ENCODE measurements at regions of chr3 and their contacts with region 1.

Region 1: GRCh38 chr3:186617038-186617946 is 4.4 kb downstream of the AHSG start:
- DNase-seq: peak; percentile 89
- H3K4me3 Mint-ChIP-seq: peak overlapping the region; percentile 19
- H3K27ac Mint-ChIP-seq: no peak overlapping the region
- H3K4me1 Mint-ChIP-seq: peaks cover 22% of the 10 kb centered on the region
- H3K27me3 Mint-ChIP-seq: peaks cover 59% of the 10 kb centered on the region

Region 2: DNA sequence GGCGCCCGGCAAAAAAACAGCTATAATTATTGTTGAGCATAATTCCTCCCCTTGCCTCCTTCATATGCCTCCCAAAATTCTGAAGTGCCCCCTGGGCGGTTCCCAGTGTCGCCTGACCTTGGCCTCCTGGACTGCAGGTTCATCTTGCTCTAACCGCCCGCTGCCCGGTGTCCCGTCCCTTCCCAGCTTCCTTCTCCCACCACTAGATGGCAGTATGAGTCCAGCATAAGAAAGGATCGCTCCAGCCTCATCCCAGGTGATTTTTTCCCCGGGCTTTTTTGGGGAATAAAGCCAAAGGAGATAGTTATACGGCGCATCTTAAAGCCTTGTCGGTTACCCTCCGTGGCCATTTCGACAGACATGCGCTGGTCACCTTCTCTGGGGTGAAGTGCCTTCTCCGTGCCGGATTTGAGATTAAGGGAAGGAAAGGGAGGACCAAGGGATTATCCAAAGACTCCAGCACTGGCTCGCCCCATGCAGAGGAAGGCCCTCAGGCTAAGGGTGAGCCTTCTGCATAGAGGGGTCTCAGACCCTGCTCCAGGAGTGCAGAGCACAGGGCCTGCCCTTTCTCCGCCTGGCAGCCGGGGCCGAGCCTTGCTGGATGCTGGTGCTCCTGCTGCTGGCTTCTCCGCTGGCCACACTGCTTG is 633.7 kb before region 1 on chr3:
- CTCF ChIA-PET with region 1: interaction called, 14 read pairs
- DNase-seq: peak; percentile 65
- H3K4me3 Mint-ChIP-seq: no peak overlapping the region
- H3K27ac Mint-ChIP-seq: no peak overlapping the region
- H3K4me1 Mint-ChIP-seq: no peaks in the 10 kb centered on the region
- H3K27me3 Mint-ChIP-seq: peaks cover 29% of the 10 kb centered on the region

Region 3: DNA sequence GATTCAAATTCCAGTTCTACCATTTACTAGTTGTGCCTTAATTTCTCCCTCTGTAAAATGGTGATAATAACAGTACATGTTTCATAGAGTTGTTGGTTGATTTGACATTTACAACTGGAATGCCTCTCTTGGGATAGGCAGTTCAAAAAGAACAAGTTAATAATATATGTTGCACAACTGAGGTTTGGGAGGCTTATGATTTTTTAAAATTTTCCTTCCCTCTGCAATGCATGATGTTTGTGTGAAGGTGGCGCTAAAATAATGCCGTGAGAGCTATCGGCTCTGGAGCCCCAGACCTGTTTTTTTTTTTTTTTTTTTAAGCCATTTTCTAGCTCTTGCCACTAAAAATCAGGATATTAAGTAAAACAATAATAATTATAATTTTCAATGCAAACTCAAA is 28.2 kb before region 1 on chr3:
- CTCF ChIA-PET with region 1: interaction called, 15 read pairs
- DNase-seq: no peak
- H3K4me3 Mint-ChIP-seq: no peak overlapping the region
- H3K27ac Mint-ChIP-seq: no peak overlapping the region
- H3K4me1 Mint-ChIP-seq: peaks cover 21% of the 10 kb centered on the region
- H3K27me3 Mint-ChIP-seq: no peaks in the 10 kb centered on the region

Region 4: GRCh38 chr3:186605561-186606545 is 11.4 kb before region 1 on chr3:
- CTCF ChIA-PET with region 1: interaction called, 28 read pairs
- DNase-seq: no peak
- H3K4me3 Mint-ChIP-seq: no peak overlapping the region
- H3K27ac Mint-ChIP-seq: no peak overlapping the region
- H3K4me1 Mint-ChIP-seq: no peaks in the 10 kb centered on the region
- H3K27me3 Mint-ChIP-seq: peaks cover 12% of the 10 kb centered on the region

Region 5: DNA sequence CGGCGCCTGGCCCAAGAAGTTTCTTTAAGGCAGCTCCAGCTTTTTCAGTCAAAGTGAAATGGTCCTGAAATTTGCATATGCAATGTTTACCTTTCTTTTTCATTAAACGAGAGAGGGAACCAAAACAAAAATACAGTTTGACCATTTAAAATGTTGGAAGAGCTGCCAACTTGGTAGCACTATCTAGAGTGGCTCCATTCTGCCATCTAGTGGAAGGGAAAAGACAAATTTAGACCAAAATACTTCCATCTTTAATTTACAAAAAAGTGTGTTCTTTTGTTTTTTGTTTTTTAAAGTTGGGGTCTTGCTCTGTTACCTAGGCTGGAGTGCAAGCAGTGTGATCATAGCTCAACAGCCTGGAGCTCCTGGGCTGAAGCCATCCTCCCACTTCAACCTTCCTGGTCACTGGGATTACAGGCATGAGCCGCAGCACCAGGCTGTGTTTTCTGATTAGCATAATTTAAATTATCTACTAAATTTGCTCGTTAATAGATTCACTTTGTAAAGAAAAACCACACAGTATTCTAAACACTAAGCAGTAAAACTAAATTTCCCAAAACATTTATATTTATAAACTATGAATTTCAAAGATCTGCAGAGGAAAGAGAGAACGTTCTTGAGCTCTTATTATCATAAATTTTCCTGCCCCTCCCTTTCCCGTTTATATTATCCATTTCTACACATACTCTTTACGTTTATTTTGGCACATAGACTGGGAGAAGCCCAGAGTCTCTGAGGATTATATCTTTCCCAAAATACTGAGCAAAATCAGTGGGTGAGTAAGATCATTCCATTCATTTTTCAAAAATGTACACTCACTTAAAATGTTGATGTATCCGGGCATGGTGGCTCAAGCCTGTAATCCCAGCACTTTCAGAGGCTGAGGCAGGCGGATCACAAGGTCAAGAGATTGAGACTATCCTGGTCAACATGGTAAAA is 204.4 kb after region 1 on chr3:
- CTCF ChIA-PET with region 1: interaction called, 136 read pairs
- DNase-seq: no peak
- H3K4me3 Mint-ChIP-seq: no peak overlapping the region
- H3K27ac Mint-ChIP-seq: no peak overlapping the region
- H3K4me1 Mint-ChIP-seq: peaks cover 18% of the 10 kb centered on the region
- H3K27me3 Mint-ChIP-seq: peaks cover 24% of the 10 kb centered on the region